Ascending aorta (tissue), 2 donors: ENCODE measurements at regions of chr4 and their contacts with region 1.

Region 1: GRCh38 chr4:87543835-87544461 is 14.8 kb upstream of the SPARCL1 start:
- DNase-seq: no peak
- H3K4me3 ChIP-seq: no peak overlapping the region
- H3K27ac ChIP-seq: peak overlapping the region; percentile 52 to 79
- H3K4me1 ChIP-seq: peaks cover 3 to 36% of the 10 kb centered on the region in 2 donors
- H3K27me3 ChIP-seq: no peaks in the 10 kb centered on the region
- CTCF ChIP-seq: peak; percentile 59 to 67 (median 63)

Region 2: DNA sequence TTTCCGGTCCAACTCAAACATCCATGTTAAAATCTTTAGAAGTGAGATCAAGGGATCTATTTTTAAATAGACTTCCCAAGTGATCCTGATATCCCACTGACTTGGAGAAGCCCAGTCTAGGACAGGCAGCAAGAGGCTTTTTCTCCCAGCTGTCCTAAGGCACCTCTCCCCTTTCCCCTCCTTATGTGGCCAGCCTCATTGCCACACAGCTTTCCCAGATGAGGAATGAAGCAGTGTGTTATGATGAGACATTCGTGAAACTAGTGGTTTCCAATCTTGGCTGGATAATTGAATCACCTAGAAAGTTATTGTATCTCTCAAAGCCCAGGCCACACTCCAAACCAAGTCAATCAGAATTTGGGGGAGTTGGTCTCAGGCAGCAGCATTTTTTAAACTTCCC is 204.5 kb before region 1 on chr4:
- intact Hi-C with region 1: no loop called
- DNase-seq: no peak
- H3K4me3 ChIP-seq: no peak overlapping the region
- H3K27ac ChIP-seq: peak overlapping the region; percentile 7 to 69
- H3K4me1 ChIP-seq: peaks cover 4 to 9% of the 10 kb centered on the region in 2 donors
- H3K27me3 ChIP-seq: no peaks in the 10 kb centered on the region
- CTCF ChIP-seq: no peak

Region 3: GRCh38 chr4:87530868-87531267 is 13.1 kb before region 1 on chr4:
- intact Hi-C with region 1: loop called (anchors 1 kb)
- DNase-seq: peak in 1 of 2 donors; percentile 89
- H3K4me3 ChIP-seq: peak overlapping the region; percentile 46 to 71
- H3K27ac ChIP-seq: peak overlapping the region; percentile 91 to 95
- H3K4me1 ChIP-seq: peaks cover 8 to 20% of the 10 kb centered on the region in 2 donors
- H3K27me3 ChIP-seq: no peaks in the 10 kb centered on the region
- CTCF ChIP-seq: no peak

Region 4: DNA sequence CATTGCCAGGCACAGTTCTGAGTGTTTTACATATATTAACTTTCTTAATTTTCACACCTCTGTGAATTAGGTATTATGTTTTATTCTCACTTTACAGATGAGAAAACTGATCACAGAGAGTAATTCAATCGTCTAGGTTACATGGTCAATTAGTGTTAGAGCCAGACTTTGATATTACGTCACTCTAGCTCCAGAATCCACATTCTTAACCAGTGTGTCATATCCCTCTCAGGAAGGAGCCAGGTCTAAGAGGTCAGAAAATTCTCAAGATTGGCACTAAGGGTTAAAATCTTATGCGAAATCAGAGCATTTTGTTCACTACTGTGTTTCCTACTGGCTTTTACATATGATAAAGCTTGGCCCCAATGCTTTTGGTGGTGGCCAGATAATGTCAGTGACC is 113.6 kb after region 1 on chr4:
- intact Hi-C with region 1: loop called (anchors 5 kb)
- DNase-seq: no peak
- H3K4me3 ChIP-seq: no peak overlapping the region
- H3K27ac ChIP-seq: no peak overlapping the region
- H3K4me1 ChIP-seq: peaks cover 2 to 22% of the 10 kb centered on the region in 2 donors
- H3K27me3 ChIP-seq: no peaks in the 10 kb centered on the region
- CTCF ChIP-seq: no peak

Region 5: GRCh38 chr4:87679449-87680169 is 135.7 kb after region 1 on chr4:
- intact Hi-C with region 1: loop called (anchors 2 kb)
- DNase-seq: no peak
- H3K4me3 ChIP-seq: no peak overlapping the region
- H3K27ac ChIP-seq: no peak overlapping the region
- H3K4me1 ChIP-seq: no peaks in the 10 kb centered on the region
- H3K27me3 ChIP-seq: no peaks in the 10 kb centered on the region
- CTCF ChIP-seq: peak; percentile 58 to 82 (median 81)

Region 6: GRCh38 chr4:87838890-87839591 is 295.1 kb after region 1 on chr4:
- intact Hi-C with region 1: loop called (anchors 2 kb)
- DNase-seq: no peak
- H3K4me3 ChIP-seq: no peak overlapping the region
- H3K27ac ChIP-seq: no peak overlapping the region
- H3K4me1 ChIP-seq: peaks cover 0 to 4% of the 10 kb centered on the region in 2 donors
- H3K27me3 ChIP-seq: no peaks in the 10 kb centered on the region
- CTCF ChIP-seq: peak; percentile 48 to 86 (median 78)